ENCODE measurements at regions of chr3 and their contacts with region 1.

Region 1: DNA sequence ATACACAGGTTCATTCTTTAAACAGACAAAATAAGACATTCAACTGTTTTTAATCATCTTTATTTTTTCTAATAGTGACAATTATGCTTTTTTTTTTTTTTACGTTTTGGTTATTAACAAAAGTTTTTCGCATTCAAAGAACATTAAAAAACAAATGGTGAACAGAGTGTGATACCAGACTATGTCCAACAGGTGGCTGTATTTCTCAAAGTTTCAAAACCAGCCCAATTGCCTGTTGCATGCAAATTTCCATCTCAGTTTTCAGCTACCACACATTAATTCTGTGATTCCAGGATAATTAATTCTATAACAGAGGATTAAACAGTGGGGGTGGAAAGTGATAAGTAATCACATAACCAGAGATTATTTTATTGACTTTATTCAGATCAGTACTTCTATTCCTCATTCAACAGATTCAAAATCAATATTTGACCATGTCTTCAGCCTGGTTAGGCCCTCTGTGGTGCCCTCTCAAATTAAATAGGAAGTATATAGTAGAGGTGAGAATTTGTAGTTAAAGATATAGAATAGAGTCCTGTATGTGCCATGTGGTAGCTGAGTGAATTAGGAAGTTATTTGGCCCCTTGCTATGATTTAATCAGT is 122.2 kb upstream of the DCBLD2 start:
- DNase-seq: peak; percentile 56
- ATAC-seq: peak; percentile 84; the same call in 1 of the 2 replicates
- H3K4me3 ChIP-seq: no peak overlapping the region
- H3K27ac ChIP-seq: no peak overlapping the region
- H3K4me1 ChIP-seq: no peaks in the 10 kb centered on the region
- H3K27me3 ChIP-seq: no peaks in the 10 kb centered on the region
- CTCF ChIP-seq: peak; percentile 82
- POLR2A ChIP-seq: no peak
- RAD21 ChIP-seq: peak; percentile 81

Region 2: GRCh38 chr3:98602078-98602678 is 421.5 kb before region 1 on chr3:
- CTCF ChIA-PET with region 1: no interaction called
- POLR2A ChIA-PET with region 1: no interaction called
- dilution Hi-C with region 1: no loop called
- in situ Hi-C with region 1: no loop called
- intact Hi-C with region 1: no loop called
- DNase-seq: peak; percentile 76
- ATAC-seq: peak; percentile 95
- H3K4me3 ChIP-seq: no peak overlapping the region
- H3K27ac ChIP-seq: no peak overlapping the region
- H3K4me1 ChIP-seq: peaks cover 2% of the 10 kb centered on the region; the same call in 1 of the 2 replicates
- H3K27me3 ChIP-seq: no peaks in the 10 kb centered on the region
- CTCF ChIP-seq: peak; percentile 84
- POLR2A ChIP-seq: no peak
- RAD21 ChIP-seq: peak; percentile 86

Region 3: DNA sequence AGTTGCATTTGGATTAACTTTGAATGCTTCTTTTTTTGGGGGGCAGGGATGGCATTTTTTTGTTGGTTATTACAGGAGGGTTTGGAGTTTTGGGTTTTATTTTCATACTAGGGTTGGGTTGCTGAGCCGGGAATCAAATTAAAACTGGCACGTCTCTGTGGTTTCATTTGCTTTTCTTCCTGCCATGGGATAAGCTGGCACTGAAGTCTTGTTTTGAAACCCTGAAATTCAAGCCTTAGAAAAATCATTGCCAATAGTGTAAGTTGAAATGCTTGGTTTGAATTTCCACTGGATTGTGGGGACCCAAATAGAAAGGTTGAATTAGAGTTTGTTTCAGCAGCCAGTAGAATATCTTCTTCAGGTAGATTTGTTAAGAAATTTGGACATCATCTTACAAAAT is 70.9 kb after region 1 on chr3:
- CTCF ChIA-PET with region 1: no interaction called
- POLR2A ChIA-PET with region 1: no interaction called
- dilution Hi-C with region 1: no loop called
- in situ Hi-C with region 1: no loop called
- intact Hi-C with region 1: loop called (anchors 5 kb)
- DNase-seq: no peak
- ATAC-seq: no peak
- H3K4me3 ChIP-seq: no peak overlapping the region
- H3K27ac ChIP-seq: no peak overlapping the region
- H3K4me1 ChIP-seq: no peaks in the 10 kb centered on the region
- H3K27me3 ChIP-seq: no peaks in the 10 kb centered on the region
- CTCF ChIP-seq: no peak
- POLR2A ChIP-seq: no peak
- RAD21 ChIP-seq: no peak

Region 4: GRCh38 chr3:99167071-99167470 is 143.4 kb after region 1 on chr3:
- CTCF ChIA-PET with region 1: interaction called, 11 read pairs
- POLR2A ChIA-PET with region 1: no interaction called
- dilution Hi-C with region 1: no loop called
- in situ Hi-C with region 1: loop called (anchors 5 kb)
- intact Hi-C with region 1: no loop called
- DNase-seq: no peak
- ATAC-seq: no peak
- H3K4me3 ChIP-seq: no peak overlapping the region
- H3K27ac ChIP-seq: no peak overlapping the region
- H3K4me1 ChIP-seq: no peaks in the 10 kb centered on the region
- H3K27me3 ChIP-seq: no peaks in the 10 kb centered on the region
- CTCF ChIP-seq: no peak
- POLR2A ChIP-seq: no peak
- RAD21 ChIP-seq: no peak

Region 5: DNA sequence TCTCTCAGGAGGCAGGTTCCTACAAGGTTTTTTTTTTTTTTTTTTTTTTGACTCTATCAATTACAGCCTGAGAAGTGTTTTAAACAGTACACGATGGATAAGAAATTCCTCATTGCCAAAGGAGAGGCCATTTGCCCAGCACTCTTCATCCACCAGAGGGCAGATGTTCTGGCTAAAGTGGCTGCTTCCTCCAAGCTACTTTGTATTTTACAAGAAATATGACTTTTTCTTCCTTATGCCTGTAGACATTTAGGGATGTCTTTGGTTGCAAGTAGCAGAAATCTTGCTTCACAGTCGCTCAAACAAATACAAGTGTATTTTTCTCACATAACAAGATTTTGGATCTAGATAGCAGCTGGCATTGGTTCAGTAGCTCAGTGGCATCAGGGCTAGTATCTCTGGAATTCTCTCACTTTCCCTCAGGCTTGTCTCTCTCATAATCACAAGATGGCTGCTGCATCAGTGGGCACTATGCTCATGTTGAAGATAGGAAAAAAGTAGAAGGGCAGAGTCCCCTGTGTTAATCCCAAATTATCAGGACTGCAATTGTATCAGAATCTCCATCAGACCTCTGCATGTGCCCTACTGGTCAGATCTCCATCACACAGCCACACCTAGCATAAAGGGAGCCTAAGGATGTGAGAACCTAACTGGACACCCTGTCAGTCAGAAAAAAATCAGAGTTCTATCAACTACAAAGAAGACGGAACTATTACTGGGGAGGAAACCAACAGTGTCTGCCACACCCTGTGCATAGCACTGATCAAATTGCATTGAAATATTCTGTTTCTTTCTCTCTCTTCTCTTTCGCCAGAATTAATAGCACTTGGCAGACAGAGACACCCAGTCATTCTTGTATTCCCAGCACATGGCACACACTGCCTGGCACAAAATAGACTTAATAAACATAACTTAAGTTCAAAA is 475.8 kb after region 1 on chr3:
- CTCF ChIA-PET with region 1: interaction called, 5 read pairs
- POLR2A ChIA-PET with region 1: no interaction called
- dilution Hi-C with region 1: no loop called
- in situ Hi-C with region 1: no loop called
- intact Hi-C with region 1: loop called (anchors 2 kb)
- DNase-seq: peak; percentile 73
- ATAC-seq: peak; percentile 65
- H3K4me3 ChIP-seq: no peak overlapping the region
- H3K27ac ChIP-seq: no peak overlapping the region
- H3K4me1 ChIP-seq: peaks cover 7% of the 10 kb centered on the region
- H3K27me3 ChIP-seq: no peaks in the 10 kb centered on the region
- CTCF ChIP-seq: peak; percentile 87
- POLR2A ChIP-seq: no peak
- RAD21 ChIP-seq: peak; percentile 79

Region 6: DNA sequence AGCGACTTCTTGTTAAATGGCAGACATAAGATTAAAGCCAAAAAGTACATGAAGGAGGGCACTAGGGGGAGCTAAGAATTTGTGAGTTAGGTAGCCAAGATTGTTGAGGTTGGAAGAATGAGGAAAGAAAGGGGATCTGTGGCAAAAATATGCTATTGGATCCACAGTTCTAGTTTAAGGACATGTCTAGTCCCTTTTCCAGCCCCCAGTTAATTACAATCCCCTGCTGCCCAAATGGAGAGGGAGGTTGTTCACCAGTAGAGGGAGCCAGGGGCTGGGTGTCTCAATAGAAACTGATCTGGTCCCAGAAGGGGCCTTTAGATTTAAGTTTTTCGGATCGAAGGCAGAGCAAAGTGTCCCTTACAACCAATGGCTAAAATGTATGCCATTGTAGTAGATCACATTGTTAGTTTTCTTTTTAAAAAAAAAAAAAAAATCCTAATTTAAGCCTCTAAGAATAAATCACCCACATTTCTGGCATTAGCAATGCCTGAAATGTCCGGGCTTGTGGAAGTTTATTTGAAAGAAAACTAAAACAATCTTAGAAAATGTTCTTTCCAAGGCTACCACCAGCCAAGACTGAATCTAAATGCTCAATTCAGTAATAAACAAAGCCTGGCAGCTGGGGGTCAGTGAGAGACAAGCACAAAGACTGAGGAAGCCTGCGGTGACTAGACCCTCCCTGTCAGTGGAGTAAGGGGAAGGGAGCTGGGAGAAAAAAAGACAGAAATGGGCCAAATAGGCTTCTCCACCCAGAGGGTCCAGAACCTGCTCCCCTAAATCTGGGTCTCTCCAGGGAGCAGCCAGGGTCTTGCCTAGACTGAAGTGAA is 621.8 kb after region 1 on chr3:
- CTCF ChIA-PET with region 1: no interaction called
- POLR2A ChIA-PET with region 1: no interaction called
- dilution Hi-C with region 1: no loop called
- in situ Hi-C with region 1: no loop called
- intact Hi-C with region 1: loop called (anchors 2 kb)
- DNase-seq: peak; percentile 81
- ATAC-seq: peak; percentile 50
- H3K4me3 ChIP-seq: no peak overlapping the region
- H3K27ac ChIP-seq: peak overlapping the region; percentile 89
- H3K4me1 ChIP-seq: peaks cover 20% of the 10 kb centered on the region
- H3K27me3 ChIP-seq: no peaks in the 10 kb centered on the region
- CTCF ChIP-seq: peak; percentile 66
- POLR2A ChIP-seq: no peak
- RAD21 ChIP-seq: peak; percentile 59

Region 7: GRCh38 chr3:99753268-99753975 is 729.7 kb after region 1 on chr3:
- CTCF ChIA-PET with region 1: interaction called, 6 read pairs
- POLR2A ChIA-PET with region 1: no interaction called
- dilution Hi-C with region 1: loop called (anchors 25 kb)
- in situ Hi-C with region 1: loop called (anchors 5 kb)
- intact Hi-C with region 1: loop called (anchors 2 kb)
- DNase-seq: peak; percentile 86
- ATAC-seq: peak; percentile 92
- H3K4me3 ChIP-seq: no peak overlapping the region
- H3K27ac ChIP-seq: peak overlapping the region; percentile 30
- H3K4me1 ChIP-seq: peaks cover 13% of the 10 kb centered on the region
- H3K27me3 ChIP-seq: no peaks in the 10 kb centered on the region
- CTCF ChIP-seq: peak; percentile 85
- POLR2A ChIP-seq: 0 out of 2 replicates have a peak, but pooled peaks have one; percentile 28
- RAD21 ChIP-seq: peak; percentile 92

Region 8: GRCh38 chr3:99794485-99794884 is 770.8 kb after region 1 on chr3:
- CTCF ChIA-PET with region 1: interaction called, 9 read pairs
- POLR2A ChIA-PET with region 1: no interaction called
- dilution Hi-C with region 1: no loop called
- in situ Hi-C with region 1: loop called (anchors 10 kb)
- intact Hi-C with region 1: loop called (anchors 1 kb)
- DNase-seq: no peak
- ATAC-seq: no peak
- H3K4me3 ChIP-seq: no peak overlapping the region
- H3K27ac ChIP-seq: no peak overlapping the region
- H3K4me1 ChIP-seq: no peaks in the 10 kb centered on the region
- H3K27me3 ChIP-seq: no peaks in the 10 kb centered on the region
- CTCF ChIP-seq: no peak
- POLR2A ChIP-seq: no peak
- RAD21 ChIP-seq: no peak